Right ventricle myocardium inferior (tissue), 1 donor: ENCODE measurements at regions of chr10 and their contacts with region 1.

Region 1: GRCh38 chr10:63157845-63158624 is 24.9 kb downstream of the NRBF2 start:
- DNase-seq: no peak
- ATAC-seq: peak; percentile 54

Region 2: GRCh38 chr10:62437696-62438095 is 720.3 kb before region 1 on chr10:
- intact Hi-C with region 1: loop called (anchors 5 kb)
- DNase-seq: no peak
- ATAC-seq: no peak

Region 3: DNA sequence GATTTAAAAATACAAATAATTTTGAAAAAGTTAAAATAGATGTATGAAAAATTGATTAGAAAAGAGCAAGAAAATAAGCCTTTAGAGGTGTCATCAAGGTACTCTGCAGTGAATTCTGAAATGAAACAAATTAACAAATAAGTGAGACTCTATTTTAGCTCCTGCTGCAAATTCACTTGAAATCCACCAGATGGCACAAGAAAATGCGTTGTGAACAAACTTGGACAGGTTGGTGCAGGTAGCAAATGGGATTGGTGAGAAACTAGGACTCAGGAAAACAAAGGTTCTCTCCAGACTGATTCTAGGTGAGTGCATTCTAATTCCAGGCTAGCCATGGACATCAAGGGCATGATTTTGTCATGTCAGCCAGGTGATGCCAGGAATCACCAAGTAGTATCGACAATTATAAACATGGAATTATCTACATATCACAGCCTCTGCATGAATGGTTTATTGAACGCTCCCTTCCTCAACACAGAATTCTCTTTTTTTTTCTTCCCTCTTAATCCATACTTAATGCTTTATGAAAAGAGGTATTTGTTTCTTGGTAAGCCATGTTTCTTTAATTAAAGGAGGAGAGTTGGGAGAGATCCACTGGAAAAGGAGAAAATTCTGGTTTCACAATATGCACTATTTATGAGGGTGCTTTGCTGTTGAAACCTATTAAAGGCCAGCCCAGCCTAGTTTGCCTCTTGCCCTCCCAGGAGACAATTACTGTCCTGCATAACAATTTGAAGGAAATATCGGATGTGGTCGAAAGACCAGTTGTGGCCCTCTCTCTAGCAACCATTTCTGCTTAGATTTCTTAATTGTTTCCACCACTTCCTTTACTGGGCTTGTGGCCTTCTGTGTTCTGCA is 665.8 kb before region 1 on chr10:
- intact Hi-C with region 1: loop called (anchors 5 kb)
- DNase-seq: no peak
- ATAC-seq: peak; percentile 83

Region 4: DNA sequence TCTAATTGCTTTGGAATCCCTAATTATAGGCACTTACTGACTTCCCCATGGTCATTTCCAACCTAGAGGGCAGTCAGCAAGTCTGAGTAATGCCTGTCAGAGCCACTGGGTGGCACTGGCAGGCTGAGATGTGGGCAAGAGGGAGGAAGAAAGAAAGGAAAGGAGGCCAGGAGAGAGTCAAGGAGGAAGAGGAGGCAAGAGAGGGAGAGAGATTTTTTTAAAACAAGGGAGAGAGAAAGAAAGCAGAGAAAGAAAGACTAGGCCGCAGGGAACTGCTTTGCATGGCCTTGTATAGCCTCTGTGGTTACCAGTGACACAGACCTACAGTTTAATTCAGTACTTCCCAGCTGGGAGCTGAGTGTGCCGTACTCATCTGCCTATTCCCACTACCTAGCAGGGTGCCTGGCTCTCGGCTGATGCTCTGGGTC is 563.9 kb before region 1 on chr10:
- intact Hi-C with region 1: loop called (anchors 2 kb)
- DNase-seq: no peak
- ATAC-seq: peak; percentile 89

Region 5: DNA sequence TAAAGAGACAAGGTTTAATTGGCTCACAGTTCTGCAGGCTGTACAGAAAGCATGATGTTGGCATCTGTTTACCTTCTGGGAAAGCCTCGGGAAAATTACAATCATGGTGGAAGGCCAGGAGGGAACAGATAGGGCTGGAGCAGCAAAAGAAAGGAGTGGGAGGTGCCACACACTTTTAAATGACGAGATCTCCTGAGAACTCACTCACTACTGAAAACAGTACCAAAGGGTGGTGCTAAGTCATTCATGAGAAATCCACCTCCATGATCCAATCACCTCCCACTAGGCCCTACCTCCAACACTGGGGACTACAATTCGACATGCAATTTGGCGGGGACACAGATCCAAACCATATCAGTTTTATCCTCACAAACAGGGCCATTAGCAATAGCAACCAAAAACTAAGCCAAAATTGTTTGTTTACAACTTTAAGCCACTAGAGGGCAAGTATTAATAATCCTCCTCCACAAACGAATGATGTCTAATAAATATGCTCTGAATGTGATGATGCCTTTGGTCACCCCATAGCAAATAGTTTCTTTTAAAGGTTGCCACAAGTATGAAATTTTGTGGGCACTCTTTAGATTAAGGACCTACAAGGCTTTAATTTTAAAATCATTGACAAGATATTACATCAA is 154.1 kb before region 1 on chr10:
- intact Hi-C with region 1: loop called (anchors 5 kb)
- DNase-seq: no peak
- ATAC-seq: no peak

Region 6: GRCh38 chr10:63083904-63084689 is 73.9 kb before region 1 on chr10:
- intact Hi-C with region 1: loop called (anchors 10 kb)
- DNase-seq: peak; percentile 74
- ATAC-seq: peak; percentile 91